ENCODE measurements at regions of chr19 and their contacts with region 1.

Region 1: DNA sequence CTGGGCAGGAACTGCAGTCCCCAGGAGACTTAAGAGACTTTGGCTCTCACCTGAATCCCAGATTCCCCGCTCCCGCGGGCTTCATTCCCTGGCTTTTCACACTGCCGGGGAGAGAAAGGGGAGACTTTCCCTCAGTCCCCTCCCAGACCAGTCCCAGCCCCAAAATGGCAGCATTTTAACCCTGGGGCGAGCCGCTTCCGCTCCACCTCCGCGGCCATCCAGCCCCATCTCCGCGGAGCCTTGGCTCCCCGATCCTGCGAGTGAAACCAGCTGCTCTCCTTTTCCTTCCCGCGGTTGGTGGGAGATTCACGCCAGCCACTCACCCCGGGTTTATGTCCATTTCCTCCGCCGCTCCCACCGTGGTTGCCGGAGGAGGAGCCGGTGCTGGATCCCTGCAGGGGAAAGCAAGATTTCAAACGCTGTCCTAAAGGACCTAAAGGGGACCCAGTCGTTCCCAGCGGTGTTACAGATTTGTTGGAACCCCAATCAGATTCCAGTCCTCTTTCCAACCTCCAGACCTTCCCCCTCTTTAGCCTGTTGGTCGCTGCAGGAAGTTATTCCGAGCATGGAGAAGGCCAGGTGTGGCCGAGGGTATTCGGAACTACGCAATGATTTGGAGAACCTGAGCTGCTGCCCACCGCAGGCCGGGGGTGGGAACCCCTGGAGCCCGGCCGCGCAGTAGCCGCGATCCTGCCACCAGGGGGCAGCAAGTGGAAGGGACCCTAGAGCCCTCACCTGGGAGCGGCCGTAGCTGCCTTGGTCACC is 3.4 kb downstream of the DMKN start:
- DNase-seq: peak; percentile 95
- H3K4me3 ChIP-seq: peak overlapping the region; percentile 7 to 63 (median 37)
- H3K27ac ChIP-seq: peak overlapping the region; percentile 67 to 89 (median 79)
- H3K4me1 ChIP-seq: peaks cover 20 to 33% of the 10 kb centered on the region in 2 donors
- H3K27me3 ChIP-seq: no peaks in the 10 kb centered on the region
- CTCF ChIP-seq: peak; percentile 91 to 99 (median 98)
- POLR2A ChIP-seq: peak in 1 of 2 donors; percentile 88

Region 2: DNA sequence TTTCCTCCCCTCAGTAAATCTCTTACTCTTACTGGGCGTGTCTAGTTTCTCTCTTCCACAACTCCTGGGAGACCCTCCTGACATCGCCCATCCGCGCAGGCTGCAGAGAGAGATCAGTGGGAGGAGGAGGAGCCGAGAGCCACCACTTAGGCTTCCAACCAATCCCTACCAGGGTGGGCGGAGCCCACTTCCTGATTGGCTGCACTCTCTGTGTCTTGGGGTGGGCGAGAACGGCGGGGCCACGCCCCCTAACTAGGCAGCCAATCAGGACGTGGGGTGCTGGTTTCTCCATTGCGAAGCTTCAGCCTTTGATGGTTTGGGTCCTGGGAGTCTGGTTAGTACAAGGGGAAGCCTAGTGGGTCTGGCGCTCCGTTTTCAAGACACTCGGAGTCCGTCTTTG is 75.8 kb after region 1 on chr19 and contains the start of gene PMIS2:
- intact Hi-C with region 1: loop called (anchors 5 kb)
- DNase-seq: peak in 1 of 2 donors; percentile 12
- H3K4me3 ChIP-seq: no peak within 1 kb of the TSS
- H3K27ac ChIP-seq: peak within 1 kb of the TSS in 1 of 3 donors; percentile 67
- H3K4me1 ChIP-seq: peaks cover 3 to 20% of the 10 kb centered on the region in 2 donors
- H3K27me3 ChIP-seq: no peaks in the 10 kb centered on the region
- CTCF ChIP-seq: no peak
- POLR2A ChIP-seq: no peak
- total RNA-seq, gene PMIS2: not detected

Measured in thyroid gland (tissue), 4 donors.